ENCODE measurements at regions of chr1 and their contacts with region 1.

Region 1: DNA sequence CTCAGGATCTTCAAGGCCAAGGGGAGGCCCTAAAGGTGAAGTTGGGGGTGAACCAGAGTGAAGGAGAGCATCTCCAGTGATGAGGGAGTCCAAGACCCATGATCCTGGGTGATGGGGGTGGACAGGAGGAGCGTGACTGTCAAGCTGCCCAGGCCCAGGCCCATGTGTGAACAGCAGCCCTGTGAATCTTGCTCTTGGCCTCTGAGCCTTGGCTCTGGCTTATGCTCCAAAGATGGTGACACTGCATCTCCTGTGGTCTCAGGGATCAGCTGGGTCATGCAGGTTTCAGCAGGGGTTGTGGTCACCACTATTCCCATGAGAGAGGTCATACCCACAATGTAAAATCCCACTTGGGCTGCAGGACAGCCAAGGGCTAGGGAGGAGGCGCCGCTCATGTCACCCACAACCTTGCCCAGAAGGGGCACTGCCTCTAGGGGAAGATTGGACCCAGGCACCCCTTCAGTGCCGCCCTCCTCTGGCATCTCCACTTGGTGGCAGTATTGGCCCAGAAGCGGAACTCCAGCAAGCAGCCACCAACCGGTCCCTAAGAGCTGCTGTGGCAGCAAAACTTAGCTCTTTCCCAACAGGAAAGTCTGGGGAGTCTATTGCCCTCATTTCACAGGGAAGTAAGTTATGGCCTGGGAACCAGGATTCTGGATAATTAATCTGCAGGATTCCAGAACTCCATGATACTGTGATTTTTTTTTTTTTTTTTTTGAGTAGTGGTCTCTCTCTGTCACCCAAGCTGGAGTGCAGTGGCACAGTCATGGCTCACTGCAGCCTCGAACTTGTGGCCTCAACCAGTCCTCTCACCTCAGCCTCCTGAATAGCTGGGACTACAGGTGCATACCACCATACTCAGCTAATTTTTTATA is 7.5 kb upstream of the WNT3A start:
- DNase-seq: peak; percentile 88
- H3K4me3 Mint-ChIP-seq: no peak overlapping the region
- H3K27ac Mint-ChIP-seq: no peak overlapping the region
- H3K4me1 Mint-ChIP-seq: no peaks in the 10 kb centered on the region
- H3K27me3 Mint-ChIP-seq: peaks cover 68% of the 10 kb centered on the region
- CTCF ChIP-seq: peak; percentile 85

Region 2: DNA sequence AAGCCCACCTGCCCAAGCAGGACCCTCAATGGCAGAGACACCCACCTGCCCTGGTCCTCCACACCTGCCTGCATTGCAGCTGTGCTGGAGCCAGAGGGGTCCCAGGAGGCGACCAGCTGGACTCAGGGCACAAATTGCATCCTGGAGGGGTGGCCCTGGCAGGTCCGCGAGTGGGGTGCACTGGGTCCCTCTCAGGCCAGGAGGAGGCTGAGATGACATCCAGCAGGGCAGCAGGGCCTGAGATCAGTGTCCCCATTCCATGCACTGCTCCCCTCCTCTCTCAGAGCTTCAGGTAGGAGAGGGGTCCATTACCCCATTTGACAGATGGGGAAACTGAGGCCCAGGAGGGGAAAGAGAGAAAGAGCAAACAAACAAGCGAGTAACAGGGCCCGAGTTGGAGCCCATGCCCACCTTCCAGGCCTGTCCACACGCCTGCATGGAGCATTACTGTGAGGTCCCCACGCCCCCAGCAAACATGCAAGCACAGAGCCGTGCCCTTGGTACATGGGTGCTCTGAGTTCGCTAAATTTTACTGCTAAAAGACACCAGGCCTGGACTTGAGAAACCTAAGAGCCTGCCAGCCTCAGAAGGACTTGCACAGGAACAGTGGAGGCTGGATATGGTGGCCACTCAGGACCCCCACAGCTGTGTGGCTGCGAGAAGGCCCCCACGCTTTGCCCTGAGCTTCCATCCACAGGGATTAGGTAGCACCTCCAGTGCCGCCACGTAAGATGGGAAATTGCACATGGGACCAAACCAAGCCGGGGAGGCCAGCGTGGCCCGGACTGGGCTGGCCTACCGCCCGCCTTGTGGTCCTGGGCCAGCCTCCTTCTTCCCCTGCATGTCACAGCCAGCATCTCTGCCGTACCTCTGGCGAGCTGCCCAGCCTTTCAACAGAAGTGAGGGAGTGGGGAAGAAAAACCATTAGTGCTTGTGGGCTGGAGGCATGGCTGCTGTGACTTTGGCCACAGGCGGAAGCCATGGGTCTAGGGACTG is 14.9 kb after region 1 on chr1:
- CTCF ChIA-PET with region 1: interaction called, 12 read pairs
- intact Hi-C with region 1: no loop called
- DNase-seq: no peak
- H3K4me3 Mint-ChIP-seq: no peak overlapping the region
- H3K27ac Mint-ChIP-seq: no peak overlapping the region
- H3K4me1 Mint-ChIP-seq: no peaks in the 10 kb centered on the region
- H3K27me3 Mint-ChIP-seq: peaks cover 54% of the 10 kb centered on the region
- CTCF ChIP-seq: no peak

Region 3: DNA sequence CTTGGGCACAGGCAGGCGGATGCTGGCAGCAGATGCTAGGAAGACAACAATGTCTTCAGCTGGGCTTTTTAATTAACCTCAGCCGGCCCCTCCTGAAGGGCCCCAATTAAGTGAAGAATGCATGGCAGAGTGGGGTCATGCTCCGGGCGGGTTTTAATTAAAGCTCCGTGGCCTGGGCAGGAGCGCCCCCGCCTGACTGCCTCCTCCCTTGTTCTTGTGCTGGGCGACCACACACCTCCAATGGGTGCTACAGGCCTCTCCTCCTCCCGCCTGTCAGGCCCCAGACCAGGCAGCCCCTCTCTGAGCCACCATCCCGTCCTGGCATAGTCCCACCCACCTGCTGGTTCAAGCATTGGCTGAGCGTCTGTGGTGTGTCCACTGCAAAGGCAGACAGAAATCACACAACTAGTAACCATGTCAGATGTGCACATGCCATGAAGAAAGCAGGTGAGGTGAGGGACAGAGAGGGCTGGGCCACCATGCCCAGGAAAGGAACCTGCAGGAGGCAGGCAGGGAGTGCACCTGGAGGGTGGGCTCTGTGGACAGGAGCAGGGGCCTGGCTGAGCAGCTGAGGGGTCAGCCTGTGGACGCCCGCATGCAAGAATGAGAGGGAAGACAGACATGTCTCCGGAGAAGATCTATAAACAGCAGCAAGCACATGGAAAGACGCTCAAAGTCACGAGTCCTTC is 74.7 kb after region 1 on chr1:
- CTCF ChIA-PET with region 1: interaction called, 7 read pairs
- intact Hi-C with region 1: loop called (anchors 5 kb)
- DNase-seq: peak; percentile 57
- H3K4me3 Mint-ChIP-seq: no peak overlapping the region
- H3K27ac Mint-ChIP-seq: no peak overlapping the region
- H3K4me1 Mint-ChIP-seq: no peaks in the 10 kb centered on the region
- H3K27me3 Mint-ChIP-seq: peaks cover 89% of the 10 kb centered on the region
- CTCF ChIP-seq: no peak

Region 4: DNA sequence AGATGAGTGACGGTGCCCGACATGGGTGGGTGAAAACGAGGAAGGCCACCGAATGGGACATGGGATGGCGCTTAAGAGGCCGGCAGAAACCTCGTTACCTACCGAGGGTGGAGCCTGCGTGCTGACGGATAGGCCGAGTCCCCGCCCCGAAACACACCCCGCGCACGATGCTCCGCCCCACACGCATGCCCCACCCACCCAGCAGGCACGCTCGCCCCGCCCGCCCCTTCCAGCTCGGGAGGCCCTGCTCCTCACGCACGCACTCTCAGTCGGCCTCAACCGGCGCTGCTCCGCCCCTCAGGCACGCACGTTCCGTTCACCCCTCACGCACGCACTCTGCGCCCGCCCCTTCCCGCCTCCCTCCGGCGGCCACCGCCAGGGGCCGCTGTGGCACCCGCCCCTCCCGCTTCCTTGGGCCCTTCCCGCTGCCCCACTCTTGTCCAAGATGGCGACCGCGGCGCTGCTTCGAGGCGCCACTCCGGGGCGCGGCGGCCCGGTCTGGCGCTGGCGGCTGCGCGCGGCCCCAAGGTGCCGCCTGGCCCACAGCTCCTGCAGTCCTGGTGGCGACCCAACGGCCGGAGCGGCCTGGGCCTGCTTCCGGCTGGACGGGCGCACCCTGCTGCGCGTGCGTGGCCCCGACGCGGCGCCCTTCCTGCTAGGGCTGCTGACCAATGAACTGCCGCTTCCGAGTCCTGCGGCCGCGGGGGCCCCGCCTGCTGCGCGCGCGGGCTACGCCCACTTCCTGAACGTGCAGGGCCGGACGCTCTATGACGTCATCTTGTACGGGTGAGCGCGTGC is 166.3 kb after region 1 on chr1 and contains the start of gene IBA57:
- CTCF ChIA-PET with region 1: interaction called, 13 read pairs
- intact Hi-C with region 1: no loop called
- DNase-seq: peak; percentile 100
- H3K4me3 Mint-ChIP-seq: peak within 1 kb of the TSS; percentile 84
- H3K27ac Mint-ChIP-seq: peak within 1 kb of the TSS; percentile 98
- H3K4me1 Mint-ChIP-seq: peaks cover 14% of the 10 kb centered on the region
- H3K27me3 Mint-ChIP-seq: no peaks in the 10 kb centered on the region
- CTCF ChIP-seq: peak; percentile 93
- total RNA-seq, gene IBA57: 9.2 and 9.5 TPM in 2 replicates

Region 5: GRCh38 chr1:228515200-228515834 is 516.0 kb after region 1 on chr1:
- CTCF ChIA-PET with region 1: no interaction called
- intact Hi-C with region 1: loop called (anchors 5 kb)
- DNase-seq: peak; percentile 53
- H3K4me3 Mint-ChIP-seq: no peak overlapping the region
- H3K27ac Mint-ChIP-seq: no peak overlapping the region
- H3K4me1 Mint-ChIP-seq: no peaks in the 10 kb centered on the region
- H3K27me3 Mint-ChIP-seq: peaks cover 81% of the 10 kb centered on the region
- CTCF ChIP-seq: peak; percentile 75

Measured in Calu3 (cell line).